Prostate gland (tissue), 2 donors: ENCODE measurements at regions of chr17 and their contacts with region 1.

Region 1: DNA sequence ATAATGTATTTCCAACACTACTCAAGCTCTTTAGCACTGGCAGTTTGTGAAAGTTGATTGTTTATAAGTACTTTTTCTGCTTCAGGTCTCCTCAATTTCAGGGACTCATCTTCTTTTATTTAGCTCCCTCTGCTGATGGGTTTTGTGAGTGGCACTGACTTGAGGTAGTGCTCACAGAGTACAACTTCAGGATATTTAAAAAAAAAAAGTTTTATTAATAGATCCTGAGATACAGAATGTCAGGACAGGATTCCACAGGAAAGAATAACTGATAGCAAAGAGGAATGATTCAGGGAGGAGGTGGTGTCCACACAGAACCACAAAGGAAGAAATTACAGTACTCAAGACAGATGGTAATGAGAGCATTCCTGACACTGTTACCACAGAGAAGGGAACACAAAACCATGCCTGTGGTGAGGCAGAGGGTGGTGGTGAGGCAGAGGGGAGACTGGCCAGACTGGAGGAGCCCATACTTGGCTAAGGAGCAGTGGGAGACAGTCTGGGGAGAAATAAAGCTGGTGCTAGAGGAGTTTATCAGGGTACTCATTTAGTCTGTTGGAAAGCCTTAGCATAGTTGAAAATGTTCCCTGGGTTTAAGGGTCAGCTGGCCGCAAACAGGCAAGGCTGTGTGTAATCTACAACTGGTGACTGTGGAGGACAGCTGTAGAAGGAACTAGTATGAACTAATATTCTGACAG is 63.7 kb downstream of the SPAG9 start:
- DNase-seq: peak; percentile 33
- H3K4me3 ChIP-seq: no peak overlapping the region
- H3K27ac ChIP-seq: peak overlapping the region; percentile 37 to 44
- H3K4me1 ChIP-seq: no peaks in the 10 kb centered on the region
- H3K27me3 ChIP-seq: no peaks in the 10 kb centered on the region
- CTCF ChIP-seq: peak; percentile 36 to 65 (median 45)
- POLR2A ChIP-seq: no peak

Region 2: DNA sequence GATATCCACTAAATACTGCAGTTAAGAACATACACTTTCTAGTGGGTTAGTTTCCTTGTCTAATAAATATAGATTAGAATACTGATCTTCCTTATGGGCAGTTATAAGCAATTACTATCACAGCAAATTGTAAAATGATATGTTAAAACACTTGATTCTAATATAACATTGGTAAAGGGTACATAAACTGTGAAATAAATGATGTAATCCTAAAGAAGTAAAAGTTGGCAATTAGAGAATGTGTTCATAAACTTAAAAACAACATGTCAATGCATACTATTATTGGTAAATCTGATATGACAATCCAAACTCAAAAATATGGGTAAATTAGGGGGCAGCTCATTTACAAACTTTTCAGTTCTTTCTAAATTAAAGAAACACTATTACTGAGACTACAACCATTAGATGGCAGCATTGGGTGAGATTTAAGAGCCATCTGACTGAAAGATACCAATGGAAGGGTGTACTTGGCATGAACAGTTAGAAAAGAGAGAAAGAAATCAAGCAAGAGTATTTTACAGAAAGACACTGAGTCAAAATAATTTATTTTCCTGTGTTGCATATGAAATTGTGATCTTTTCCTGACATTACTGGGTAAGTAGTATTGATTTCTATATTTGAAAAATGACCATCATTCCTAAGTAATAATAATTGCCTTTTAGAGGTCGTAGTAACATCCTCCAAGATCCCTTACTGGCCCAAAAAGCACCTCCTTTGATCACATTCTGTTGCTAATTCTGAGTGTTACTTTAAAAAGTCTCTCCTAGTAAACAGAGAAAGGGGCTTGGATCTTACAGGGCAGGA is 55.9 kb before region 1 on chr17:
- intact Hi-C with region 1: loop called (anchors 5 kb)
- DNase-seq: peak; percentile 20
- H3K4me3 ChIP-seq: no peak overlapping the region
- H3K27ac ChIP-seq: no peak overlapping the region
- H3K4me1 ChIP-seq: no peaks in the 10 kb centered on the region
- H3K27me3 ChIP-seq: no peaks in the 10 kb centered on the region
- CTCF ChIP-seq: peak in 3 of 4 experiments; percentile 59 to 76 (median 76)
- POLR2A ChIP-seq: no peak

Region 3: GRCh38 chr17:51289696-51290111 is 232.7 kb after region 1 on chr17:
- intact Hi-C with region 1: no loop called
- DNase-seq: no peak
- H3K4me3 ChIP-seq: no peak overlapping the region
- H3K27ac ChIP-seq: no peak overlapping the region
- H3K4me1 ChIP-seq: no peaks in the 10 kb centered on the region
- H3K27me3 ChIP-seq: no peaks in the 10 kb centered on the region
- CTCF ChIP-seq: no peak
- POLR2A ChIP-seq: no peak